Sigmoid colon (tissue), 7 donors: ENCODE measurements at regions of chr6 and their contacts with region 1.

Region 1: GRCh38 chr6:149925974-149926777 is 3.3 kb upstream of the RAET1G start:
- DNase-seq: peak; percentile 94
- H3K4me3 ChIP-seq: peak overlapping the region; percentile 33 to 58 (median 50)
- H3K27ac ChIP-seq: peak overlapping the region in 3 of 4 donors; percentile 27 to 65 (median 33)
- H3K4me1 ChIP-seq: peaks cover 0 to 31% (median 25%) of the 10 kb centered on the region in 4 donors
- H3K27me3 ChIP-seq: peaks cover 0 to 30% (median 17%) of the 10 kb centered on the region in 3 donors
- CTCF ChIP-seq: peak; percentile 94 to 98 (median 96)
- EP300 ChIP-seq: no peak
- POLR2A ChIP-seq: no peak

Region 2: DNA sequence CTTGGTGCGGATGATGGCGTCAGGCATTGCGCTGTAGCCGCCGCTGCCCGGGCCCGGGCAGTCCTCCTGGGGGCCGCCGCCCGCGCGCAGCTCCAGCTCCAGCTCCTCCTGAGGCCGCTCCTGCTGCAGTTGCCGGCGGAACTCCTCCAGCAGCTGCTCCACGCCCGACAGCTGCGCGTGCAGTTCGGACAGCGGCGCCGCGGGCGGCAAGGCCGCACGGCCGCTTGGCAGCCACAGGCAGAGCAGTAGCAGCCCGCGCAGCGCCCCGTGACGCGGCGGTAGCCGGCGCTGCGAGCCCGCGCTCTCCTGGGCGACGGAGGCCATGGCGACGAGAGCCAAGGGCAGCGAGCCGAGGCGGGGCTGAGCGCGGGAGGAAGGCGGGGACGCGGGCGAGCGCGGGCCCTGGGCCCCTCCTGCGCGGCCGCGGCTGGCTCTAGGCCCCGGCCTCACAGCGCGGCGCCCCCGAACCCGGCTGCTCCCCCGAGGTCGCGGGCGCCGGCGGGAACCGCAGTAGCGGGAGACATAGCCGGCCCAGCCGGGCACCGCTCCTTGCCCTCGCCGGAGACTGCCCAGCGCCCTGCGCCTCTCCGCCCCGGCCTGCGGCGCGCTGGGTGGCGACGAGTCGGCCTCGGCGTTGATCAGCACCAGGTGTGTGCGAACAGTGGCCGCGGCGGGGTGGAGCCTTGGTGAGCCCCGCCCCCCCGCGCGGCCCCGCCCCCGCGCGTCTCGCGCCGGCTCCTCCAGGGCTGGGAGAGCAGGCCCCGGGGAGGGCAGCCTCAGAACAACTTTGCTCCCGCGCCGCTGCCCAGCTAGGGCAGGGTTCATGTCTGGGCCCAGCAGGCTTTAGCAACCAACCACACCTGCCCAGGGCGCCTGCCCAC is 62.2 kb before region 1 on chr6 and contains the start of gene LRP11:
- intact Hi-C with region 1: loop called (anchors 1 kb)
- DNase-seq: peak; percentile 93
- H3K4me3 ChIP-seq: peak within 1 kb of the TSS; percentile 30 to 89 (median 72)
- H3K27ac ChIP-seq: peak within 1 kb of the TSS; percentile 90 to 97 (median 94)
- H3K4me1 ChIP-seq: peaks cover 0 to 29% (median 19%) of the 10 kb centered on the region in 4 donors
- H3K27me3 ChIP-seq: no peaks in the 10 kb centered on the region
- CTCF ChIP-seq: no peak
- EP300 ChIP-seq: no peak
- POLR2A ChIP-seq: no peak
- total RNA-seq, gene LRP11: 17.2 to 71.7 (median 21.5) TPM